AG04449 (cell line): ENCODE measurements at regions of chr17 and their contacts with region 1.

Region 1: GRCh38 chr17:42422958-42423712 is at the start of gene CAVIN1:
- DNase-seq: peak; percentile 92
- H3K4me3 ChIP-seq: peak within 1 kb of the TSS; percentile 100
- CTCF ChIP-seq: no peak

Region 2: GRCh38 chr17:42252528-42253172 is 170.5 kb before region 1 on chr17:
- CTCF ChIA-PET with region 1: no interaction called
- POLR2A ChIA-PET with region 1: no interaction called
- DNase-seq: no peak
- H3K4me3 ChIP-seq: no peak overlapping the region
- CTCF ChIP-seq: no peak

Region 3: DNA sequence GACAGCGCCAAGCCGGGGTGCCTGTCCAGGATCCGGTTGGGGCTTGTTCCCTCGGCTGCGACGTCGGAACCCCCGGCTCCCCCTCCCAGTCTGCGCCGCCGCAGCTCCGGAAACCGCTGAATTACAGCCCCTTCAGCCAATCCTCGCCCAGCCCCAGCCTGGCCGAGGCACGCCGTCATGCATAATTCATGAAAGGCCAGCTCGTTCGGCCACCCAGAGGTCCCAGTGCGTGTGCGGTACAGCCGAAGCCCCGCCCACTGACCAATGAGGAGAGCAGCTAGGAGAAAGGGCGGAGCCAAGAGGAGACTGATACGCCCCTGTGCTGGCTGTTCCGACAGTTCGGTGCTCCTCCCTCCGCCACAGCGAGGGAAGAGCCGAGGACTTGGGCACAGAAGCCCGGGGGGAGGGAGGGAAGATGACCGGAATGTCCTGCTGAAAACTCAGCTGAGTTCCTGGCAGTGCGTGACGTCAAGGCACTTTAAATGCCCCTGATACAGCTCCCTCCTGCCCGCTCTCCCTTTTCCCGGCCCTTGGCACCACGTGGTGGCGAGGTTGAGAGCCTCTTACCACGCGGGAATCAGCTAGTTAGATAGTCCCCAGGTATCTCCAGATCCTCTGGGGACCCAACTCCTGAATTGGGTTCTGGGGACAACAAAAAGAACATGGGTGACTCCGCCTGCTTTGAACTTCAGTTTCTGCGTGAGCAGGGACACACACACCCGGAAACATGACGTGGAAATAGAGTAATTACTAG is 34.6 kb before region 1 on chr17 and contains the start of gene STAT3:
- CTCF ChIA-PET with region 1: interaction called, 5 read pairs
- POLR2A ChIA-PET with region 1: interaction called, 10 read pairs
- DNase-seq: peak; percentile 98
- H3K4me3 ChIP-seq: peak within 1 kb of the TSS; percentile 96
- CTCF ChIP-seq: no peak

Region 4: DNA sequence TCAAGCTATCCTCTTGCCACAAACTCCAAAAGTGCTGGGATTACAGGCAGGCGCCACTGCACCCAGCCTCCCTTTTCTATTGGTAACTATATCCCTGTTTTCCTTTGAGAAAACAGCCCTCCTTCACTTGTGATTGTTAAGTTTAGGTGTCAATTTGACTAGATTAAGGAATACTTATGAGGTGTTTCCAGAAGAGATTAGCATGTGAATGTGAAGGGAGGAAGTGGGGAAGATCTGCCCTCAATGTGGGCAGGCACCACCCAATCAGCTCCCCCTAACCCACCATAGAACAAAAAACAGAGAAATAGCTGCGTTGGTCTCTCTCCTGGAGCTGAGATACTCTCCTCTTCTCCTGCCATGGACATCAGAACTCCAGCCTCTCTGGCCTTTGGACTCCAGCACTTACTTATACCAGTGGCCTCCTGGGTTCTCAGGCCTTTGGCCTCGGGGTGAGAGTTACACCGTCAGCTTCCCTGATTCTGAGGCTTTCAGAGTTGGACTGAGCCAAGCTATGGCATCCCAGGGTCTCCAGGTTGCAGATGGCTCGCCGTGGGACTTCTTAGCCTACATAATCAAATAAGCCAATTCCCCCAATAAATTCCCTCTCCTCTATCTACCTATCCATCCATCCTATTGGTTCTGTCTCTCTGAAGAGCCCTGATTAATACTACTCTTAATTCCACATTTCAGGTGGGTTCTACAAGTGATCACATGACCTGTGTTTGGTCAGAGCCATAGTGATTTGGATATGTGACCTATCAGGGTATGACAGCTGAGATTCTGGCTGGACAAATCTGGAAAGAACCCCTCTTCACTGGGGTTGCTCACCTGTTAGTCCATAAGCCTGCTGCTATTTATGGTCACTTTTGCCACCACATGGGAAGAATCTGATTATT is 22.9 kb before region 1 on chr17:
- CTCF ChIA-PET with region 1: interaction called, 6 read pairs
- POLR2A ChIA-PET with region 1: interaction called, 13 read pairs
- DNase-seq: no peak
- H3K4me3 ChIP-seq: no peak overlapping the region
- CTCF ChIP-seq: no peak

Region 5: DNA sequence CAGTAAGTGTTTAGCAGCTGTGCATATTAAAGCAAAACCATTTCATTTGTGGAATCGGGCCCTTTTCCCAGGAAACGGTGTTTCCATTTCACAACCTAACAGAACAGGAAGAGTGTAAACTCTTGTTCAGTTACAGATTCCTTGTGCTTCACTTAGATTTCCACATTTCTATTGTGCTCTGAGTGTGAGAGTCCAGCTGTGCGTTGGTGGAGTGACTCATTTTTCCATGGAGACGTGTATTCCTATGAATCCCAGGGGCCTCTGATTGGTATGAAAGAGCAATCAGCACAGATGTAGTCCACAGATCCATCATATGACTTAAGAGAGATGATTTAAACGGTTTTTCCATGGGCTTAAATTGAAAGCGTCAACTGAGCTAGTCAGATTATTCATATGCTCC is 13.3 kb after region 1 on chr17:
- CTCF ChIA-PET with region 1: interaction called, 7 read pairs
- POLR2A ChIA-PET with region 1: interaction called, 14 read pairs
- DNase-seq: peak; percentile 89
- H3K4me3 ChIP-seq: no peak overlapping the region
- CTCF ChIP-seq: no peak

Region 6: DNA sequence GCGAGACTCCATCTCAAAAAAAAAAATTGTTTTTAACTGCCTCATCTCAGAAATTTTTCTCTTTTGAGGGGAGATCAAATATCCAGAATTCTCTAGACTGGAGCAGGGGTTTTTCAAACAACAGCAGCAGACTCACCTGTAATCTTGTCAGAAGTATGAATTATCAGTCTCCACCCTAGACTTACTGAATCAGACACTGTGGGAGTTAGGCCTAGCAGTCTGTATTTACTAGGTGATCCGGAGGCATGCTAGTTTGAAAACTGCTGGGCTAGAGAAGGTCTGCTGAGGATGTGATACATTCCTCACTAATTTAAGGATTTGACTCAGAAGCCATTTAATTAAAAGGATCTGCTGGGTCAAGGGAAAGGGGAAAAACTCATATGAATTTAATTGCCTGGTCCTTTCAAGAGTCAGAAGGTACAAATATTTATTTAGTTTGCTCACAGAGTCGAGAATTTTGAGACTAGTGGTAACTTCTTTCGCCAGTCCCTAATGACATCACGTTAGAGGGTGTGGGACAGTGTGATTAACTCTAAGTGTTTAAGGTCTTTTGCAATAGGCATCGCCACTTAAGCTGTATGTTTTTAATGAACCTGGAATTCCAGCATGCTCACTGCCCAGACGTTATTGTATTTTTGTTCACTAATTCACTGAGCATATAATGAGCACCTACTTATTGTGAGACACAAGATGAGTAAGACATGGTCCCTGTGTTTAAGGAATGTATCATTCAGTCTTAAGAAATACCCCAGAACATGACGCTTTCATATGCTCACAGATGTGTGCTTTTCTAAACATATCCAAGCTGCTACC is 49.8 kb after region 1 on chr17:
- CTCF ChIA-PET with region 1: no interaction called
- POLR2A ChIA-PET with region 1: interaction called, 10 read pairs
- DNase-seq: peak; percentile 71
- H3K4me3 ChIP-seq: no peak overlapping the region
- CTCF ChIP-seq: no peak